Left cardiac atrium (tissue), 4 donors: ENCODE measurements at regions of chr5 and their contacts with region 1.

Region 1: GRCh38 chr5:102782311-102782770 is 27.2 kb downstream of the PAM start:
- DNase-seq: no peak
- ATAC-seq: no peak

Region 2: GRCh38 chr5:102681407-102681983 is 100.8 kb before region 1 on chr5:
- intact Hi-C with region 1: loop called in 1 of 2 experiments (anchors 10 kb)
- DNase-seq: peak; percentile 77
- ATAC-seq: peak; percentile 73 to 89

Region 3: GRCh38 chr5:102971697-102972293 is 189.5 kb after region 1 on chr5:
- intact Hi-C with region 1: loop called in 1 of 2 experiments (anchors 10 kb)
- DNase-seq: no peak
- ATAC-seq: peak; percentile 18 to 51